CD14-positive monocyte (primary cell): ENCODE measurements at regions of chr10 and their contacts with region 1.

Region 1: DNA sequence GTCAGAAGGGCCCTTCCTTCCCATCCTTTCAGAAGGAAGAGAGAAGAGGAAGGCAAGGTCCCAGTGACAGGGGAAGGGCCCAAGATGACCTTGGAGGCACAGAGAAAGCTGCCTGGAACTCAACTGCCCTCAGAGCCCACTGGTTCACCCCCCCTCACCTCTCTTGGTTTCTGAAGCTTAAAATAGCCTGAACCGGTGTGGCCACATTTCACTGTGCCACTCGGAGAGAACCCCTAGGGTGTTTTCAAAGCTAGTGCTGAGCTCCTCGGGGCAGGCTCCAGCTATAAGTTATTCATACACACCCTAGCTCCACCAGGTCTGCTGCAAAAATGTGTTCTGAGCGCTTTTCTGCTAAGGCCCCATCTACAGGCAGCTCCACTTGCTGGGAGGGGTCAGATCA is 60.9 kb upstream of the ADRB1 start:
- DNase-seq: no peak
- H3K4me3 ChIP-seq: no peak overlapping the region
- H3K4me3 Mint-ChIP-seq: no peak overlapping the region
- H3K27ac ChIP-seq: no peak overlapping the region
- H3K27ac Mint-ChIP-seq: no peak overlapping the region
- H3K4me1 ChIP-seq: peaks cover 20 to 31% of the 10 kb centered on the region in 2 donors
- H3K4me1 Mint-ChIP-seq: peaks cover 35% of the 10 kb centered on the region
- H3K27me3 ChIP-seq: no peaks in the 10 kb centered on the region
- H3K27me3 Mint-ChIP-seq: peaks cover 0 to 3% (median 3%) of the 10 kb centered on the region in 3 donors
- CTCF ChIP-seq: no peak

Region 2: GRCh38 chr10:114017271-114017670 is 34.5 kb after region 1 on chr10:
- intact Hi-C with region 1: loop called in 1 of 2 experiments (anchors 5 kb)
- DNase-seq: no peak
- H3K4me3 ChIP-seq: no peak overlapping the region
- H3K4me3 Mint-ChIP-seq: no peak overlapping the region
- H3K27ac ChIP-seq: no peak overlapping the region
- H3K27ac Mint-ChIP-seq: no peak overlapping the region
- H3K4me1 ChIP-seq: peaks cover 12 to 23% of the 10 kb centered on the region in 2 donors
- H3K4me1 Mint-ChIP-seq: peaks cover 24% of the 10 kb centered on the region
- H3K27me3 ChIP-seq: no peaks in the 10 kb centered on the region
- H3K27me3 Mint-ChIP-seq: peaks cover 4 to 8% (median 6%) of the 10 kb centered on the region in 3 donors
- CTCF ChIP-seq: no peak

Region 3: DNA sequence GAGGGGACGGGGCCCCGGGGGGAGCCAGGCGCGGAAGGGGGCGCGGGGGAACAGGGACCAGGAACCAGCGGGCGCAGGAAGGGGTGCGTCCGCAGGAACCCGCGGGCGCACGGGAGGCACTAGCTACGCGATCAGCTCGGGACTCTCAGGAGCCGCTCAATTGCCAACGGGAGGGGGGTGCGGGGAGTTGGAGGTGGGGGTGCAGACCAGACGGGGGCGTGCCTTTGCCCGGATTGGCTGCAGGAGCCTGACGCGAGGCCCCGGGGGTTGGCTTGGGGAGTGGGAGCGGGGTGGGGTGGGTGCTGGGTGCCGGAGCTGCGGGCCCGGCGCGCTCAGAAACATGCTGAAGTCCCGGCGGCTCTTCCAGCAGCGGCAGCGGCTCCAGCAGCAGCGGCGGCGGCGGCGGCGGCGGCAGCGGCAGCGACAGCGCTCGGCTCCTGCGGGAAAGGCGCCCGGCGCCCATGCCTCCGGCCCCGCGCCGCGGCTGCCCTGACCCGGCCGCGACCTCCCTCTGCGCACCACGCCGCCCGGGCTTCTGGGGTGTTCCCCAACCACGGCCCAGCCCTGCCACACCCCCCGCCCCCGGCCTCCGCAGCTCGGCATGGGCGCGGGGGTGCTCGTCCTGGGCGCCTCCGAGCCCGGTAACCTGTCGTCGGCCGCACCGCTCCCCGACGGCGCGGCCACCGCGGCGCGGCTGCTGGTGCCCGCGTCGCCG is 60.9 kb after region 1 on chr10 and contains the start of gene ADRB1:
- intact Hi-C with region 1: loop called in 1 of 2 experiments (anchors 10 kb)
- DNase-seq: peak; percentile 38 to 64 (median 64)
- H3K4me3 ChIP-seq: peak within 1 kb of the TSS; percentile 34 to 82 (median 38)
- H3K4me3 Mint-ChIP-seq: peak within 1 kb of the TSS; percentile 89 to 99
- H3K27ac ChIP-seq: peak within 1 kb of the TSS in 1 of 2 donors; percentile 63
- H3K27ac Mint-ChIP-seq: peak within 1 kb of the TSS; percentile 72 to 91 (median 81)
- H3K4me1 ChIP-seq: peaks cover 42 to 60% of the 10 kb centered on the region in 2 donors
- H3K4me1 Mint-ChIP-seq: peaks cover 48% of the 10 kb centered on the region
- H3K27me3 ChIP-seq: peaks cover 15 to 57% of the 10 kb centered on the region in 2 donors
- H3K27me3 Mint-ChIP-seq: peaks cover 35 to 42% (median 41%) of the 10 kb centered on the region in 3 donors
- CTCF ChIP-seq: no peak
- polyA plus RNA-seq, gene ADRB1: 0.05 to 3.4 TPM in 2 of 3 donors, not detected in the other